Thyroid gland (tissue), 4 donors: ENCODE measurements at regions of chr5 and their contacts with region 1.

Region 1: DNA sequence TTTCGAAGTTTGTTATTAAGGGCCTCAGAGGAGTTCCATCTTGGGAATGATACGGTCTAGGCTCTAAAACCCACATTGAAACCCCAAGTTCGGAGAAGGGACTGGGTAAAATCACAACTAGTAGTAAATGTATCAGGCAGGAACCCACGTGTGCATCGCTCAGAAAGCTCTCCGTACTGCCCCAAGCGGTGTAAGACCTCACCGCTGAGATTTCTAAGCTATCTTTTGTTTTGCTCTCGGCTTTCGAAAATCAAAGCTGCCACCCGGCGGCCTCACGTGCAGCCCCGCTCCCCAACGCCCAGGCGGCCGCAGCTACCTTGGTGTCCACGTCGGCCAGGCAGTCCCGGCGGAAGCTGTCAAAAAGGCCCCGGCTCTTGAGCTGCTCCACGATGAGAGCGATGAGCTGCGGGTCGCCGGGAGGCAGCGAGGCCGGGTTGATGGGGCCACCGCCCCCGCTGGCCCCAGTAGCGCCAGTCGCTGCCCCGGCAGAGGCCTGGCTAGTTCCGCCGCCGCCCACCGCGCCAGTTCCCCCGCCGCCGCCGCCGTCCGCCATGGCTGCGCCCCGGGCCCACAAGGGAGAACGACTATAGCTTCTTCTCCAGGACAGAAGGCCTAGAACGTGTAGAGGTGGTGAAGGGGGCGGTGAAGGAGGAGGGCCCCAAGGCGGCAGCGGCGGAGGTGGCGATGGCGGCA is 420 bp downstream of the BOD1 start:
- DNase-seq: peak; percentile 70 to 77
- H3K4me3 ChIP-seq: peak overlapping the region; percentile 42 to 87 (median 68)
- H3K27ac ChIP-seq: peak overlapping the region; percentile 82 to 96 (median 94)
- H3K4me1 ChIP-seq: peaks cover 26 to 41% of the 10 kb centered on the region in 2 donors
- H3K27me3 ChIP-seq: no peaks in the 10 kb centered on the region
- CTCF ChIP-seq: peak; percentile 35 to 66 (median 51)
- POLR2A ChIP-seq: peak in 1 of 2 donors; percentile 52

Region 2: DNA sequence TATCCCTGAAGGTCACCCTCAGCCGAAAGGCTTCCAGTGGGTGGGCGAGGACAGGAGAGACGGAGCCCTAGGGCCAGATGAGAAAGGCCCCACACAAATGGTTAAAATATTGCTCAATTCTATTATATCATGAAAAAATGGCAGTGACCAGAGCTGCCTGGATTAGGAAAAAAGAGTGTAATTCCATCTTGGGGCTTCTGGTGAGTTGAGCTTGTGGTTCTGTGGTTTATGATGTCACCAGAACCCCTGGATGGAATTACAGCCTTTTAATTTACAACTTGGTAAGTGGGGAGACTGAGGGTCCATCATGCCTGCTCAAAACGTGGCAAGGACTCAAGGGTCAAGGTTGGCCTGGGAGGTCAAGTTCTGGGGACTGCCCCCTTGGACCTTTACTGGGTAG is 232.3 kb before region 1 on chr5:
- intact Hi-C with region 1: no loop called
- DNase-seq: no peak
- H3K4me3 ChIP-seq: no peak overlapping the region
- H3K27ac ChIP-seq: no peak overlapping the region
- H3K4me1 ChIP-seq: no peaks in the 10 kb centered on the region
- H3K27me3 ChIP-seq: no peaks in the 10 kb centered on the region
- CTCF ChIP-seq: no peak
- POLR2A ChIP-seq: no peak

Region 3: GRCh38 chr5:173530547-173530946 is 85.5 kb before region 1 on chr5:
- intact Hi-C with region 1: no loop called
- DNase-seq: no peak
- H3K4me3 ChIP-seq: no peak overlapping the region
- H3K27ac ChIP-seq: no peak overlapping the region
- H3K4me1 ChIP-seq: no peaks in the 10 kb centered on the region
- H3K27me3 ChIP-seq: no peaks in the 10 kb centered on the region
- CTCF ChIP-seq: no peak
- POLR2A ChIP-seq: no peak

Region 4: GRCh38 chr5:173802670-173803165 is 186.7 kb after region 1 on chr5:
- intact Hi-C with region 1: no loop called
- DNase-seq: no peak
- H3K4me3 ChIP-seq: no peak overlapping the region
- H3K27ac ChIP-seq: no peak overlapping the region
- H3K4me1 ChIP-seq: peaks cover 5 to 25% of the 10 kb centered on the region in 2 donors
- H3K27me3 ChIP-seq: no peaks in the 10 kb centered on the region
- CTCF ChIP-seq: no peak
- POLR2A ChIP-seq: no peak

Region 5: GRCh38 chr5:173895401-173896165 is 279.6 kb after region 1 on chr5:
- intact Hi-C with region 1: no loop called
- DNase-seq: no peak
- H3K4me3 ChIP-seq: no peak overlapping the region
- H3K27ac ChIP-seq: peak overlapping the region in 2 of 3 donors; percentile 94 to 96
- H3K4me1 ChIP-seq: peaks cover 16 to 40% of the 10 kb centered on the region in 2 donors
- H3K27me3 ChIP-seq: no peaks in the 10 kb centered on the region
- CTCF ChIP-seq: no peak
- POLR2A ChIP-seq: no peak

Region 6: GRCh38 chr5:173972925-173973615 is 357.0 kb after region 1 on chr5:
- intact Hi-C with region 1: loop called (anchors 2 kb)
- DNase-seq: peak; percentile 92 to 93
- H3K4me3 ChIP-seq: peak overlapping the region in 2 of 3 donors; percentile 13 to 38
- H3K27ac ChIP-seq: peak overlapping the region; percentile 75 to 90 (median 83)
- H3K4me1 ChIP-seq: peaks cover 11 to 23% of the 10 kb centered on the region in 2 donors
- H3K27me3 ChIP-seq: no peaks in the 10 kb centered on the region
- CTCF ChIP-seq: peak; percentile 57 to 98 (median 84)
- POLR2A ChIP-seq: peak; percentile 26 to 67

Region 7: DNA sequence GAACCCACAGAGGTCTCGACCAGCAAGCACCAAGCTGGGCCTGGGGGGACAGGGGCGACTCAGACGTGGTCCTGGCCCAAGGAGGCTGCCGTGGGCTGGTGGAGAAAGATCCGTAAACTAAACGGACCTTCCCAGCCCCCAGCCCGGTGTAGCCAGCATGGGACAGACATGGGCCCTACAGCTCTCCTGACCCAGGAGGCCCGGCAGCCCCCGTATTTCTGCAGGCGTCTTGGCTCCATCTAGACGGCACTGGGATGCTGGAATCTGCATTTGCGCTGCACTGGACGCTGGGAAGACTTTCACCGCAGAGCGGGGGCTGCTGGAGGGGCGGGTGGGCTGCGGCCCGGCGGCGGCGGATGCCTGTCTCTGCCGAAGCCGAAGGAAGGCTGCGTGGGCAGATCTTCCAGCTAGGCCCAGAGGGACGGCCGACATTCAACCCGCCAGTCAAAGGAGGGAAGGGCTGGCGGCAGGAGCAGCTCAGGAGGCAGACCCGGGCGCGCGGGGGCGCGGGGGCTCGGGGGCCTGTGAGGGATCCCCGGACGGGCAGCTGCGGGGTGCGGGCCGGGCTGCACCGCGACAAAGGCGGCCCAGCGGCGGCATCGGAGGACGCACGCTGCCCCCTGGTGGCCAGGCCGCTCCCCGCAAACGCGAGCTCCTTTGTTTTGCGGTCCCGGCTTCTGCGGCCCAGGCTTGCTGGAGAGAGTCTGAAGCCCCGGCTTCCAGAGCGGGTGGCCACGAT is 695.7 kb after region 1 on chr5:
- intact Hi-C with region 1: loop called (anchors 5 kb)
- DNase-seq: peak; percentile 60 to 67
- H3K4me3 ChIP-seq: peak overlapping the region in 1 of 3 donors; percentile 23
- H3K27ac ChIP-seq: no peak overlapping the region
- H3K4me1 ChIP-seq: peaks cover 4 to 8% of the 10 kb centered on the region in 2 donors
- H3K27me3 ChIP-seq: peaks cover 3% of the 10 kb centered on the region
- CTCF ChIP-seq: peak; percentile 39 to 93 (median 70)
- POLR2A ChIP-seq: no peak